Activated CD4-positive, alpha-beta T cell treated with anti-CD3 and anti-CD28 coated beads, Interleukin-2, amount 10 ng/mL, durations not matched to agents 7 days and 5 days (primary cell): ENCODE measurements at regions of chr18 and their contacts with region 1.

Region 1: DNA sequence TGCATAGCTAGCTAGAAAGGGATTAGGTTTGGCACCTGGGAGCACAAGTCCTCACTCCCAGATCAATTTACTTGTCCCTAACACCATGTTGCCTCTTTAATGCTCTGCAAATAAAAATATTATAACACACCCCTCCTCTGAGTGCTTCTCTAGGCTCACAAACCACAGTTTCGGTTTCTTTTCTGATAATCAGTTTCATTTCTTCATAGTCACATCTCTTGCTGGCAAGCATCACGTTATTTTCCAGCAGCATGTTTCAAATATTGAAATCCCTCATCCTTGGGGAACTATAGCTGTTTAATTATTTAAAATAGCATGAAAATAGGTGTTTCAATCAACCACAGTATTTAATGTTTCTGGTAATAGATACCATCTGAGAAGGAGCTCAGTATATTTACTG is 13.9 kb upstream of the SMCHD1 start:
- DNase-seq: peak; percentile 48
- H3K4me3 Mint-ChIP-seq: peak overlapping the region; percentile 59
- H3K27ac Mint-ChIP-seq: no peak overlapping the region
- H3K4me1 Mint-ChIP-seq: peaks cover 56% of the 10 kb centered on the region
- H3K27me3 Mint-ChIP-seq: no peaks in the 10 kb centered on the region

Region 2: GRCh38 chr18:2654105-2654927 is 12.7 kb after region 1 on chr18:
- CTCF ChIA-PET with region 1: interaction called, 14 read pairs
- POLR2A ChIA-PET with region 1: interaction called, 7 read pairs
- DNase-seq: no peak
- H3K4me3 Mint-ChIP-seq: peak overlapping the region; percentile 85
- H3K27ac Mint-ChIP-seq: peak overlapping the region; percentile 97
- H3K4me1 Mint-ChIP-seq: peaks cover 43% of the 10 kb centered on the region
- H3K27me3 Mint-ChIP-seq: no peaks in the 10 kb centered on the region